H1 (cell line): ENCODE measurements at regions of chr2 and their contacts with region 1.

Region 1: DNA sequence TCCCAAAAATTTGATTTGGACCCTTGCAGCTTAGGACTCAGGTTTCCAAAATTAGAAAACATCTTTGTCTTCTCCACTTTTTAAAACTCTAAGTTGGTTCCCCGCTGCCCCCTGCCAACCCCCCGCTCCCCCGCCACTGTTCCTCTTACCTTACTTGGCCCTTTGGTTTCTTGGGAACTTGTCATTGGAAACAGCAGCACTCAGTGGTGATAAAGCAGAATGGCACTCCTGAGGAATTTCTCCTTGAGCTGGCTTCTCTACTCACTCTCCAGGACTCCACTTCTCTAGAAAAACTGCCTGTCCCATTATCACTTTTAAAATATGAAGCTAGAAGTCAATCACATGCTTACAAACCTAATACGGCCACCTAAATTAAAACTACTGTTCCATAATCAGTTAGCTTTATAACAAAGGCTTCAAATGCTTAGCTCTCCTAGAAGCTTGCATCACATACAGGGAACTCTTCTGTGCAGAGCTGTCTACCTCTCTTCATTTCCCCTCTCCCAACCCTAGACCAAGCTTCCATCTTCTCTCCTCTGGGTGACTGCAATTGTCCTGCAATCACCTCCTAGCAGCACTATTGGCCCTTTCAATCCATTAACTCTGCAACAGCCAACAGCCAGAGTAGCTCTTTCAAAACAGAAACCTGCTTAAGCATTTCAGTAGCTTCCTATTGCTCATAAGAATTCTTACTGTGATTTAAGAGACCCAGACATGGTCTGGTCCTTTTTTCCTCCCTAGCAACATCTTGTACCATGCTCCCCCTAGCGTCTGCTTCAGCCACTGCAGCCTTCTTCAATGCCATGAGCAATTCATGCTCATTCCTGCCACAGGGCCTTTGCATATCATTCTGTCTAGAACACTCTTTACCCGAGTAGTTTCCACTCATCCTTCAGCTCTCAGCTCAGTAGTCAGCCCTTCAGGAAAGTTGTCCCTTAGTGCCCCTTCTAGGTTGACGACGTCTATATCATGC is 15.2 kb upstream of the PLEKHM3 start:
- DNase-seq: peak in 1 of 2 experiments; percentile 84
- H3K4me3 ChIP-seq: no peak overlapping the region
- H3K27ac ChIP-seq: no peak overlapping the region
- H3K4me1 ChIP-seq: peaks cover 0 to 13% (median 7%) of the 10 kb centered on the region in 4 experiments; a peak in 2 of 7 replicates
- H3K27me3 ChIP-seq: no peaks in the 10 kb centered on the region
- CTCF ChIP-seq: peak; percentile 62 to 94 (median 69)
- EP300 ChIP-seq: no peak
- POLR2A ChIP-seq: no peak
- RAD21 ChIP-seq: peak; percentile 77 to 79

Region 2: GRCh38 chr2:207625018-207625907 is 415.2 kb before region 1 on chr2 and contains the start of gene METTL21A:
- CTCF ChIA-PET with region 1: interaction called, 25 read pairs
- POLR2A ChIA-PET with region 1: interaction called, 3 read pairs
- DNase-seq: peak; percentile 46 to 86
- H3K4me3 ChIP-seq: peak within 1 kb of the TSS; percentile 67 to 94 (median 82)
- H3K27ac ChIP-seq: peak within 1 kb of the TSS; percentile 72
- H3K4me1 ChIP-seq: peaks cover 0 to 4% (median 0%) of the 10 kb centered on the region in 4 experiments; a peak in 1 of 7 replicates
- H3K27me3 ChIP-seq: no peaks in the 10 kb centered on the region
- CTCF ChIP-seq: peak; percentile 37 to 45 (median 37); a peak in 3 of 4 replicates
- EP300 ChIP-seq: peak in 1 of 2 experiments; percentile 13; a peak in 1 of 3 replicates
- POLR2A ChIP-seq: peak; percentile 58 to 78
- RAD21 ChIP-seq: 0 out of 4 replicates have a peak, but pooled peaks have one; percentile 10 to 16
- total RNA-seq, gene METTL21A: 52.2 and 55.0 TPM in 2 replicates

Region 3: GRCh38 chr2:207762146-207762545 is 278.3 kb before region 1 on chr2:
- CTCF ChIA-PET with region 1: interaction called, 69 read pairs
- POLR2A ChIA-PET with region 1: no interaction called
- DNase-seq: no peak
- H3K4me3 ChIP-seq: no peak overlapping the region
- H3K27ac ChIP-seq: no peak overlapping the region
- H3K4me1 ChIP-seq: peaks cover 15 to 40% (median 26%) of the 10 kb centered on the region in 4 experiments
- H3K27me3 ChIP-seq: no peaks in the 10 kb centered on the region
- CTCF ChIP-seq: no peak
- EP300 ChIP-seq: no peak
- POLR2A ChIP-seq: no peak
- RAD21 ChIP-seq: no peak

Region 4: GRCh38 chr2:207819021-207819797 is 221.3 kb before region 1 on chr2:
- CTCF ChIA-PET with region 1: interaction called, 11 read pairs
- POLR2A ChIA-PET with region 1: no interaction called
- DNase-seq: no peak
- H3K4me3 ChIP-seq: no peak overlapping the region
- H3K27ac ChIP-seq: no peak overlapping the region
- H3K4me1 ChIP-seq: peaks cover 0 to 3% (median under 1%) of the 10 kb centered on the region in 4 experiments; a peak in 2 of 7 replicates
- H3K27me3 ChIP-seq: no peaks in the 10 kb centered on the region
- CTCF ChIP-seq: no peak
- EP300 ChIP-seq: no peak
- POLR2A ChIP-seq: no peak
- RAD21 ChIP-seq: no peak

Region 5: GRCh38 chr2:207926133-207926988 is 114.1 kb before region 1 on chr2:
- CTCF ChIA-PET with region 1: no interaction called
- POLR2A ChIA-PET with region 1: no interaction called
- DNase-seq: no peak
- H3K4me3 ChIP-seq: no peak overlapping the region
- H3K27ac ChIP-seq: no peak overlapping the region
- H3K4me1 ChIP-seq: peaks cover 0 to 7% (median 0%) of the 10 kb centered on the region in 4 experiments; a peak in 2 of 7 replicates
- H3K27me3 ChIP-seq: no peaks in the 10 kb centered on the region
- CTCF ChIP-seq: no peak
- EP300 ChIP-seq: no peak
- POLR2A ChIP-seq: no peak
- RAD21 ChIP-seq: no peak

Region 6: DNA sequence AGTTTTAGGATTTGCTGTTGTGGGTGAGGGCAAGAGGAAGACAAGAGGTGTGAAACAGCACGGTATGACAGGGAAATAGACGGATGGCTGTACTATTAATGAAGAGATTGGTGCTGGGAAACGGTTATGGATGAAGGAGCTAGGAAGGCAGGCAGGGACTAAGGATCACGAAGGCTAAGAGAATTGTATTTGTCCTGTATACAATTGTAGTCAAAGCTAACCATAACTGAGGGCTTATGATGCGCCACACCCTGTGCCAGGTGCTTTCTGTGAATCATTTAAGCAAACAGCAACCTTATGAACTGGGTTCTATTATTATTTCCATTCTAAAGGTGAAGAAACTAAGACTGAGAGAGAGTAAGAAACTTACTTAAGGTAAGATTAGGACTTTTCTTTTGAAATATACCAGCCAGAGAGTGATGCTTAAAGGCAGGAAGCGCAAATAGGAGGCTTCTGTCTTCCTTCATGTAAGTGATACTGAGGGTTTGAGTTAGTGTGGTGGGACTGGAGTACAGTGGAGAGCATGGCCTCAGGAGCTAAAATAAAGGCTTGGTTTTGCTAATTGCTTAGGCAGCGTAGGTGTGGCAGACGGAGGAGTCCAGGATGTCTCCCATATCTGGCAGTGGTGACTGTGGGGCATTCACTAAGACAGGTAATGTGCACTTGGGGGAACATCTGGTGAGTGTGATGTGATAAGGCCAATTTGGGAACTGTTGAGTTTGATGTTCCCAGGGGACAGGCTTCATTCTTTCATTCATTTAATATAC is 101.0 kb before region 1 on chr2:
- CTCF ChIA-PET with region 1: interaction called, 11 read pairs
- POLR2A ChIA-PET with region 1: no interaction called
- DNase-seq: no peak
- H3K4me3 ChIP-seq: no peak overlapping the region
- H3K27ac ChIP-seq: no peak overlapping the region
- H3K4me1 ChIP-seq: peaks cover 0 to 6% (median 2%) of the 10 kb centered on the region in 4 experiments; a peak in 3 of 7 replicates
- H3K27me3 ChIP-seq: no peaks in the 10 kb centered on the region
- CTCF ChIP-seq: no peak
- EP300 ChIP-seq: no peak
- POLR2A ChIP-seq: no peak
- RAD21 ChIP-seq: no peak

Region 7: GRCh38 chr2:207995887-207996286 is 44.6 kb before region 1 on chr2:
- CTCF ChIA-PET with region 1: interaction called, 17 read pairs
- POLR2A ChIA-PET with region 1: no interaction called
- DNase-seq: no peak
- H3K4me3 ChIP-seq: no peak overlapping the region
- H3K27ac ChIP-seq: no peak overlapping the region
- H3K4me1 ChIP-seq: no peaks in the 10 kb centered on the region
- H3K27me3 ChIP-seq: no peaks in the 10 kb centered on the region
- CTCF ChIP-seq: no peak
- EP300 ChIP-seq: no peak
- POLR2A ChIP-seq: no peak
- RAD21 ChIP-seq: no peak

Region 8: DNA sequence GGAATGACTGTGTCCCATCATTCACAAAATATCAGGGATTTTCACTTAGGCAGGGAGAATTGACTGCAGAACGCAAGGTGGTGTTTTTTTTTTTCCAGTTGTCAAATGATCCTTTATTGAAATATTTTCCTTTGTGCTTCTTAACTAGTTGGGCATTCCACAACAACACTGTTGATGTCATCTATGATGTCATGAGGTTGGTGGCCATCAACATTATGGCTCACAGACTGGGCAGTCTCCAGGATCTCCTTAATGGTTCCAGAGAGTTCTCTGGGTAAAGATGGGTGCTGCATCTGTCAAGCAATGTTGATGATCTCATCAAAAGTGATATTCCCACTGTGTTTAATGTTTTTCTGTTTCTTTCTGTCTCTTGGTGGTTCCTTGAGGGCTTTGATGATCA is 16.6 kb after region 1 on chr2:
- CTCF ChIA-PET with region 1: interaction called, 21 read pairs
- POLR2A ChIA-PET with region 1: no interaction called
- DNase-seq: no peak
- H3K4me3 ChIP-seq: no peak overlapping the region
- H3K27ac ChIP-seq: no peak overlapping the region
- H3K4me1 ChIP-seq: no peaks in the 10 kb centered on the region
- H3K27me3 ChIP-seq: no peaks in the 10 kb centered on the region
- CTCF ChIP-seq: no peak
- EP300 ChIP-seq: no peak
- POLR2A ChIP-seq: no peak
- RAD21 ChIP-seq: no peak